ENCODE measurements at regions of chr3 and their contacts with region 1.

Region 1: DNA sequence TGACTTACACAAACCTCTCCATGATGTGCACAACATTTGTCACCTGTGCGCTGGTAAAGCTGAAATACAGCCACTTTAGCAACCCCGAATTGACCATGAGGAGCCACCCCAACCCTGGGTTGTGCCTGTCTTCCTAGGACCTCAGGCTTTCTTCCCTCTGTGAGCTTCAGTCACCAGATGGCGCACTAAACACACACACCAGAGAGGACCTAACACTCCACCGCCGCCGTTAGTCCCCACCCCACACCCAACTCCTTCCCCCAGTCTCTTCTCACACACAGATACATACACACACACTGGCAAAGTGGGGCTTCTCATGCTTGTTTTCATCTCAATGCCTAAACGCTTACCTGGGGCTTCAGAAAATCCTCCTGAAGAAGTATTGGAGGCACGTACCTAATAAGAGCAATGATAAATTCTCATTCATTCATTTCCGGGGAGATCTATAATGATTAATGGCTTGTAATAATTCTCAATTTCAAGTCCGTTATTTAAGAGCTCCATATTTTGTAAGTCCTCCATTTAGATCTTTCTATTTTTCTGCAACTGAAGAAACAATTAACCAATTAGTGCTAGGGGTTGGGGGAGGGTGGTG is 2.1 kb upstream of the CCDC80 start:
- DNase-seq: peak; percentile 79
- H3K4me3 ChIP-seq: peak overlapping the region in 1 of 3 experiments; percentile 8
- H3K27ac ChIP-seq: peak overlapping the region; percentile 23
- H3K4me1 ChIP-seq: peaks cover 49% of the 10 kb centered on the region
- H3K27me3 ChIP-seq: no peaks in the 10 kb centered on the region
- CTCF ChIP-seq: peak; percentile 88 to 95

Region 2: DNA sequence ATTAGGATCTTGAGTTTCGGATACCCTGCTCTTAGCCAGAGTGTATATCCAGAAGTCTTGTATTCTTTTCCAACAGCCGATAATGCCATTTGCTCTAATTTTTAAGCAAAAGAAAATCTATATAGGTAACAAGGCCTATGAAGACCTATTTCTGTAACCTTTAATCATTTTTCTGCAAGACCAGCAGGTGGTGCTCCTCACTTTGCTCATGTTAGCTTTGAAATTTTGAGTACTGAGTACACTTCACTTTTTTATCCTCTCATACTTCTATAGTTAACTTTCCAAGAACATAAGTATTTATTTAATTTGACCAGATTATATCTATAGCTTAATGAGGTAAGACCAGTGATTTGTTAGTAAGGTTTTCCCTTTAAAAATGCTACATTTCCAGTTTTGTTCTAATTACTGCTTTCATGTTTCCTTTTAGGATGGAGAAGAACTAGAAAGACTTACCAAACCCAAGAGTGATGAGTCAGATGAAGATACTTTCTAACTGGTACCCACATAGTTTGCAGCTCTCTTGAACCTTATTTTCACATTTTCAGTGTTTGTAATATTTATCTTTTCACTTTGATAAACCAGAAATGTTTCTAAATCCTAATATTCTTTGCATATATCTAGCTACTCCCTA is 60.6 kb before region 1 on chr3:
- CTCF ChIA-PET with region 1: no interaction called
- dilution Hi-C with region 1: no loop called
- in situ Hi-C with region 1: loop called in 1 of 2 experiments (anchors 10 kb)
- intact Hi-C with region 1: loop called (anchors 1 kb)
- DNase-seq: peak; percentile 29
- H3K4me3 ChIP-seq: no peak overlapping the region
- H3K27ac ChIP-seq: no peak overlapping the region
- H3K4me1 ChIP-seq: no peaks in the 10 kb centered on the region
- H3K27me3 ChIP-seq: no peaks in the 10 kb centered on the region
- CTCF ChIP-seq: peak; percentile 50 to 68

Region 3: DNA sequence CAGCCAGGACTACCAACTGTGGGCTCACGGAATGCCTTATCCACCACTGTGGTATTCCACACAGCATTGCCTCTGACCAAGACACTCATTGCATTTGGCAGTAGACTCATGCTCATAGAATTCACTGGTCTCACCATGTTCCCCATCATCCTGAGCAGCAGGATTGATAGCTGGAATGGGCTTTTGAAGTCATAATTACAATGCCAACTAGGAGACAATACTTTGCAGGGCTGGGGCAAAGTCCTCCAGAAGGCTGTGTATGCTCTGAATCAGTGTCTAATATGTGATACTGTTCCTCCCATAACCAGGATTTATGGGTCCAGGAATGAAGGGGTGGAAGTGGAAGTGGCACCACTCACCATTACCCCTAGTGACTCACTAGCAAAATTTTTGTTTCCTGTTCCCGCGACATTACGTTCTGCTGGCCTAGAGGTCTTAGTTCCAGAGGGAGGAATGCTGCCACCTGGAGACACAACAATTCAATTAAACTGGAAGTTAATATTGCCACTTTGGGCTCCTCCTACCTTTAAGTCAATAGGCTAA is 56.5 kb after region 1 on chr3:
- CTCF ChIA-PET with region 1: no interaction called
- dilution Hi-C with region 1: no loop called
- in situ Hi-C with region 1: loop called in 1 of 2 experiments (anchors 10 kb)
- intact Hi-C with region 1: loop called (anchors 1 kb)
- DNase-seq: peak; percentile 69
- H3K4me3 ChIP-seq: no peak overlapping the region
- H3K27ac ChIP-seq: no peak overlapping the region
- H3K4me1 ChIP-seq: peaks cover 9% of the 10 kb centered on the region
- H3K27me3 ChIP-seq: no peaks in the 10 kb centered on the region
- CTCF ChIP-seq: peak in 1 of 2 donors; percentile 27

Region 4: DNA sequence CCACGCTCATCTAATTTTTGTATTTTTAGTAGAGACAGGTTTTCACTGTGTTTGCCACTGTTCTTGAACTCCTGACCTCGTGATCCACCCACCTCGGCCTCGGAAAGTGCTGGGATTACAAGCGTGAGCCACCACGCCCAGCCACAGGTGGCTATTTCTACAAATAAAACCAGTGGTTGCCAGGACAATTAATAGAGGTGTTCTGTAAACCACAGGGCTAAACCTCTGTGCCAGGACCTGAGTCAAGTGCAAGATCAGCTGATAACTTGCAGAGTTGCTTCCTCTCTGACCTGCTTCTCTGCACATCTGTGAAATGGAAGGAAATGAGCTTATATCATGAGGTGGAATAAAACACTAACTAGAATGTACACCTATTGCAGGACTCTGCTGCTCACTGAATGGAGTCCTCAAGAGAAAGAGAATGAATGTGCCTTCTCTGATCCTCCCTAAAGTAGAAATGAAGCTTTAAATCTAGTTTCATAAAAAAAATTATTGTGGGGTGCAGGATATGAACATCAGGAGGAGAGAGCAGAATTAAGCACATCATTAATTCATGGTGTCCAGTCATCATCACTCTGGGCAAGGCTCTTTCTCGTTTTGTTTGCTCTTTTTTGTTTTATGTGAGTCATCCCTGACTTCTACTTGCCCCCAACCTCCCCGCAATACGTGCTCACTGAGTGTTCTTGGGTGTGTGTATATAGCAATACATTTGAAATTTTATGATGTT is 131.0 kb after region 1 on chr3:
- CTCF ChIA-PET with region 1: no interaction called
- dilution Hi-C with region 1: no loop called
- in situ Hi-C with region 1: no loop called
- intact Hi-C with region 1: loop called (anchors 1 kb)
- DNase-seq: peak; percentile 97
- H3K4me3 ChIP-seq: no peak overlapping the region
- H3K27ac ChIP-seq: peak overlapping the region; percentile 95
- H3K4me1 ChIP-seq: peaks cover 65% of the 10 kb centered on the region
- H3K27me3 ChIP-seq: no peaks in the 10 kb centered on the region
- CTCF ChIP-seq: no peak

Region 5: GRCh38 chr3:112984485-112984884 is 341.5 kb after region 1 on chr3:
- CTCF ChIA-PET with region 1: interaction called, 4 read pairs
- dilution Hi-C with region 1: loop called (anchors 5 kb)
- in situ Hi-C with region 1: loop called (anchors 5 to 10 kb)
- intact Hi-C with region 1: loop called (anchors 1 kb)
- DNase-seq: no peak
- H3K4me3 ChIP-seq: no peak overlapping the region
- H3K27ac ChIP-seq: no peak overlapping the region
- H3K4me1 ChIP-seq: no peaks in the 10 kb centered on the region
- H3K27me3 ChIP-seq: no peaks in the 10 kb centered on the region
- CTCF ChIP-seq: no peak

Region 6: DNA sequence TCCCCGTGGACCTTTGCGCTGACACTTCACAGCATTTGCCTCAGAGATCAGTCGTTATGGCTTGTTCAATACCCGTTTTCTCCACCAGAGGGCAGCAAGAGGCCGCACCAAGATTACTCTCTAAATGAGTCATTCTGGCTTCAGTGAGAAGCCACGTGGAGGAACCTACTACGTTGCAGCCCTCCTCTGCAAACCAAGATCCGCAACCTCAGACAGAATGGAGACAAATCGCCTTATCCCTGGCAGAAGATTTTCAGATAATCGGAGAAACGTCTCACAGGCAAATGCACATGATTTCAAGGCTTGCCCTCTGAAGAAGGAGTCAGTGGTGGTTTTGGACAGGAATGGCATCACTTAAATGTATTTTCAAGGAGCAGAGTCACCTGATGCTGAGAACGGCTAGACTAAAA is 408.3 kb after region 1 on chr3:
- CTCF ChIA-PET with region 1: no interaction called
- dilution Hi-C with region 1: no loop called
- in situ Hi-C with region 1: no loop called
- intact Hi-C with region 1: loop called (anchors 2 kb)
- DNase-seq: peak; percentile 64
- H3K4me3 ChIP-seq: no peak overlapping the region
- H3K27ac ChIP-seq: no peak overlapping the region
- H3K4me1 ChIP-seq: peaks cover 18% of the 10 kb centered on the region
- H3K27me3 ChIP-seq: no peaks in the 10 kb centered on the region
- CTCF ChIP-seq: peak; percentile 79 to 82

Measured in mammary epithelial cell (primary cell).